Caco-2 (cell line): ENCODE measurements at regions of chr5 and their contacts with region 1.

Region 1: GRCh38 chr5:56270568-56271392 is 37.6 kb upstream of the ANKRD55 start:
- DNase-seq: peak; percentile 89 to 92
- H3K4me3 ChIP-seq: no peak overlapping the region
- H3K4me3 Mint-ChIP-seq: no peak overlapping the region
- H3K27ac Mint-ChIP-seq: peak overlapping the region; percentile 74
- H3K4me1 ChIP-seq: peaks cover 25% of the 10 kb centered on the region
- H3K4me1 Mint-ChIP-seq: peaks cover 29% of the 10 kb centered on the region
- H3K27me3 ChIP-seq: no peaks in the 10 kb centered on the region
- H3K27me3 Mint-ChIP-seq: no peaks in the 10 kb centered on the region
- CTCF ChIP-seq: peak; percentile 99

Region 2: DNA sequence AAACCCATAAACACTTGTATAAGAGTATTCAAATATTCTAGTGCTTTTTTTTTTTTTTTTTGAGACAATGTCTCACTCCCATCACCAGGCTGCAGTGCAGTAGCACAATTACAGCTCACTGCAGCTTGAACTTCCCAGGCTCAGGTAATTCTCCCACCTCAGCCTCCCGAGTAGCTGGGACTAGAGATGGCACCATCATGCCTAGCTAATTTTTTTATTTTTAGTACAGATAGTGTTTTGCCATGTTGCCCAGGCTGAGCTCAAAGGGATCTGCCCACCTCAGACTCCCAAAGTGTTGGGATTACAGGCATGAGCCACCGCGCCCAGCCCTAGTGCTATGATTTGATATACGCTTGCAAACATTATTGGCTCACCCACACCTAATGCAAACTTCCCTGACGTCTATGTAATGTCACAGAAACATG is 287.8 kb before region 1 on chr5:
- CTCF ChIA-PET with region 1: no interaction called
- POLR2A ChIA-PET with region 1: no interaction called
- intact Hi-C with region 1: loop called (anchors 1 kb)
- DNase-seq: peak; percentile 50 to 60
- H3K4me3 ChIP-seq: no peak overlapping the region
- H3K4me3 Mint-ChIP-seq: no peak overlapping the region
- H3K27ac Mint-ChIP-seq: no peak overlapping the region
- H3K4me1 ChIP-seq: peaks cover 50% of the 10 kb centered on the region
- H3K4me1 Mint-ChIP-seq: peaks cover 30% of the 10 kb centered on the region
- H3K27me3 ChIP-seq: no peaks in the 10 kb centered on the region
- H3K27me3 Mint-ChIP-seq: no peaks in the 10 kb centered on the region
- CTCF ChIP-seq: peak; percentile 36 to 57

Region 3: DNA sequence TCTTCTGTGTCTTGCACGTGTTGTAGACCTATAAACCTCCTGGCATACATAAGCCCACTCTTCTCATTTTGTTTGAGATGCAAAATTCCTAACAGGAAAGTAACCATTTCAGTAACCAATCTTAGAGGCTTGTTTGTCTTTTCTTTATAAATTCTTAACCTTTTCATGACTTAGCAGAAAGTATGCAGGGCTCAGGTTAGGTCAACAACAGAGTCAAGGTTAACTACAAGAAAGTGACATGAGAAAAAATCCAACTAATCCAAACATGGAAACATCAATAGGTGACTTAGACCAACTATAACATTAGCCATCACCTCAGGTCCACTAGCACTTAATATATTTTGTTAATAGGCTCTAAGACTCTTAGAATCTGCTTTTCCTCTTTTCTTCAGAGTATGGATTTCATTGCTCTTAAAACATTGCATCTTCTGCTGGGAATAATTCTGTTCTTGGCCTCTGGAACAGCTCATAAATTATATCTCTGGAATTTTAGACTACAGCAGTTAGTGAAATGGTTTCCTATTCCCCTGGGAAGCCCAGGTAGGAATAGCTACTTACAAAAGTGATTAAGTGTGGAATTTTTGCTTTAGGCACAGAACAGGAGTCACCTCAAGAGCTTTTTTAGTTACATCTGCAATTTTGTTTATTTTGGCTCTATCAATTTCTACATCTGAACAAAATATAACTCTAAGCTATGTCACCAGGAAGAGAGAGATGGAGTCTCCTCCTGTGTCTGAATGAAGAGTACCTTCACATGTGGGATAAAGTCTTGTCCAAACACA is 117.6 kb after region 1 on chr5:
- CTCF ChIA-PET with region 1: no interaction called
- POLR2A ChIA-PET with region 1: no interaction called
- intact Hi-C with region 1: loop called (anchors 1 kb)
- DNase-seq: no peak
- H3K4me3 ChIP-seq: no peak overlapping the region
- H3K4me3 Mint-ChIP-seq: no peak overlapping the region
- H3K27ac Mint-ChIP-seq: no peak overlapping the region
- H3K4me1 ChIP-seq: peaks cover 29% of the 10 kb centered on the region
- H3K4me1 Mint-ChIP-seq: peaks cover 18% of the 10 kb centered on the region
- H3K27me3 ChIP-seq: no peaks in the 10 kb centered on the region
- H3K27me3 Mint-ChIP-seq: no peaks in the 10 kb centered on the region
- CTCF ChIP-seq: no peak

Region 4: DNA sequence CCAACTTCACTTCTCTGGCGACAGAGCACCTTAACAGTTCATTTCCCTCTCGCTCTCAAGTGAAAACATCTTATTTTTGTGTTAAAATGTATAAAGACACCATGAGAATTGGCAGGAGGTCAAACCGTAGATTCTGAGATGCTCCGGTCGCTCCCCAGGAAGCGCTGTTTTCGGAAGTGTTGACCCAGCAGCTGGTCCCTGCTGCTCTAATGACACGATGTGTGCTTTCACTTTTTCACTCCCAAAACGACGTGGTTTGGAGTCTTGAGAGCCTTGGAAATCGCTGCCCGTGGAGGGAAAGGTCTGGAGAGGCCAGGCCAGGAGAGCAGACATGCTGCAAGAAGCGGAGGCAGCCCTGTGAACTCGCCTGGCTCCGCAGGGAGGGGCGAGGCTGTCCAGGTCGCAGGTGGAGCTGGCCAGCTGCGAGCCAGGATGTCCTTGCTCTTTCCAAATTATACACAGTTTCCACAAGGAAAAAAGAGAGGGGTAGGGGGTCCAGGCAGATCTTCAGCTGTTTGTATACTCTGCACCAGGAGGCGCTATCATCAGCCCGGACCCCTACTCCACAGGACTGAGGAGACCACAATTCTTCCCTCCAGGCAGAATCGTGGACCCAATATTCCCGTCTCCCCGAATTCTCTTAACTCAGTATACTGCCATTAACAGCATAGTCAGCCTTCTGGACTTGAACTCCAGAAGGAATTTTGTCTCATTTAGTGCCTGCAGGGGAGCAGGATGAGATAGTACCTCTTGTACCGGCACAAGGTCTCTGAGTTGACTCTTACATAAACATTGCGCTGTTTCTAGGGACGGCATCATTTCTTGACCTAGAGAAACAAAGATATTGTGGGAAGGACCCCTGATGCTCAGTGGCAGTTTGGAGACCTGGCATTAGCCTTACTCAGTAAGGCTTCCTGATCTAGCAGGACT is 210.9 kb after region 1 on chr5:
- CTCF ChIA-PET with region 1: interaction called, 12 read pairs
- POLR2A ChIA-PET with region 1: interaction called, 3 read pairs
- intact Hi-C with region 1: loop called (anchors 1 kb)
- DNase-seq: peak; percentile 62 to 66
- H3K4me3 ChIP-seq: peak overlapping the region; percentile 56
- H3K4me3 Mint-ChIP-seq: peak overlapping the region; percentile 69
- H3K27ac Mint-ChIP-seq: peak overlapping the region; percentile 71
- H3K4me1 ChIP-seq: peaks cover 40% of the 10 kb centered on the region
- H3K4me1 Mint-ChIP-seq: peaks cover 24% of the 10 kb centered on the region
- H3K27me3 ChIP-seq: no peaks in the 10 kb centered on the region
- H3K27me3 Mint-ChIP-seq: no peaks in the 10 kb centered on the region
- CTCF ChIP-seq: peak in 1 of 2 experiments; percentile 55

Region 5: DNA sequence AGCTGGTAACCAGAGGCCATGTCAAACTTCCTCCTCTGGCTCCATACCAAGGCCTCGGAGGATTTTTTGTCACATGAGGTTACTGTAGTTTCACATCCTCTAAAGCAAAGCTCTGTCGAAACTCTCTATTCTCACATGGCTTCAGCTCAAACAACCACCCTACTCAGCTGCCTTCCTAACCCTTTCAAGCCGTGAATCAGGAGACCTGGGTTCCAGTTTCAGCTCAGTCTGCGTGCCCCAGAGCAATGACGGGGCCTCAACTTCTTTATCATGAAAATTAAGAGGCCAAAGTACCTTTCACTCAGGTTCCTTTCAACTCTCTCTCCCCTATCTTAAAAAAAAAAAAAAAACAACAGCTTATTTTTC is 399.3 kb after region 1 on chr5:
- CTCF ChIA-PET with region 1: no interaction called
- POLR2A ChIA-PET with region 1: no interaction called
- intact Hi-C with region 1: loop called (anchors 10 kb)
- DNase-seq: no peak
- H3K4me3 ChIP-seq: no peak overlapping the region
- H3K4me3 Mint-ChIP-seq: no peak overlapping the region
- H3K27ac Mint-ChIP-seq: peak overlapping the region; percentile 50
- H3K4me1 ChIP-seq: peaks cover 28% of the 10 kb centered on the region
- H3K4me1 Mint-ChIP-seq: peaks cover 27% of the 10 kb centered on the region
- H3K27me3 ChIP-seq: no peaks in the 10 kb centered on the region
- H3K27me3 Mint-ChIP-seq: no peaks in the 10 kb centered on the region
- CTCF ChIP-seq: no peak

Region 6: GRCh38 chr5:56900858-56901578 is 630.2 kb after region 1 on chr5:
- CTCF ChIA-PET with region 1: interaction called, 3 read pairs
- POLR2A ChIA-PET with region 1: no interaction called
- intact Hi-C with region 1: loop called (anchors 2 kb)
- DNase-seq: peak in 1 of 2 experiments; percentile 71
- H3K4me3 ChIP-seq: no peak overlapping the region
- H3K4me3 Mint-ChIP-seq: no peak overlapping the region
- H3K27ac Mint-ChIP-seq: no peak overlapping the region
- H3K4me1 ChIP-seq: peaks cover 5% of the 10 kb centered on the region; the same call in 1 of the 2 replicates
- H3K4me1 Mint-ChIP-seq: no peaks in the 10 kb centered on the region
- H3K27me3 ChIP-seq: no peaks in the 10 kb centered on the region
- H3K27me3 Mint-ChIP-seq: no peaks in the 10 kb centered on the region
- CTCF ChIP-seq: peak; percentile 66 to 80